Posterior cingulate gyrus (tissue), 11 donors: ENCODE measurements at regions of chr12 and their contacts with region 1.

Region 1: DNA sequence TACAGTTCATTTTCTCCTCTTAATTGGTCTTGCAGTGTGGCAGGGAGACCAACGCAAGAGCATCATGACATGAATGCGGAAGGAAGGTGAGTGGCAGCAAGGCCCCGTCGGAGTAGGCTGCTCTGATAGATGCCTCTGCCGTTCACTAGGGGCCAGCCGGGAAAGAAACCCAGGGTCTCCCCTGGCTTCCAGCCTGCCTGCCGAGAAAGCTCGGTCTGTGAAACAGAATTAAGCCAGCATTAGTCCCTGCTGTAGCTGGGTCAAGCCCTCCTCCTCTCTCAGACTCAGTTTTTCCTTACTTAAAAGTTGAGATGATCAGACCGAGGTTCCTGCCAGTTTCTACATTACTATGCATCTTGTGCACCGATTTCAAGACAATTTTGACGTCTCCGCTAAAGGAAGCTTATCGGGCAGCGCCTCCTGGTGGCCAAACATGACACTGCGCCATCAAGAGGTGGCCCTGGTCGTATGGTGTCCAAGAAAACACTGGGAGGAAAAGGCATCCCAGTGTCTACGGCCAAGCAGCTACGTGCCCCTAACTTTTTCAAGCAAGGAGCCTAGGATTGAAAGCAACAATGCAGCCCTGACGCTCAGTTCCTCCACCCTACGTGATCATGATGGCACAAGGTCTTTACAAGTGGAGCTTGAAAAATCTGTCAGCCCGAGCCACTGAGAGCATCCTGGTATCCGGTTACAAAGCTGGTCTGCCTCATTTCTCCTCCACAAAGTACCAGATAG is 131.6 kb downstream of the KSR2 start:
- DNase-seq: peak; percentile 77 to 97 (median 90)

Region 2: GRCh38 chr12:117212563-117213190 is 624.5 kb before region 1 on chr12:
- intact Hi-C with region 1: loop called (anchors 2 kb)
- DNase-seq: peak; percentile 38 to 93 (median 77)

Region 3: GRCh38 chr12:117236456-117237001 is 600.6 kb before region 1 on chr12:
- intact Hi-C with region 1: loop called (anchors 1 kb)
- DNase-seq: peak; percentile 73 to 99 (median 96)

Region 4: GRCh38 chr12:117367011-117367638 is 470.0 kb before region 1 on chr12:
- intact Hi-C with region 1: loop called (anchors 1 kb)
- DNase-seq: peak; percentile 38 to 95 (median 87)

Region 5: GRCh38 chr12:117774941-117775775 is 62.0 kb before region 1 on chr12:
- intact Hi-C with region 1: no loop called
- DNase-seq: no peak

Region 6: GRCh38 chr12:117890137-117890536 is 53.0 kb after region 1 on chr12:
- intact Hi-C with region 1: no loop called
- DNase-seq: no peak